AG04450 (cell line): ENCODE measurements at regions of chr6 and their contacts with region 1.

Region 1: GRCh38 chr6:155340464-155341129 is 26.3 kb upstream of the TFB1M start:
- DNase-seq: peak; percentile 10
- H3K4me3 ChIP-seq: no peak overlapping the region
- H3K27ac ChIP-seq: no peak overlapping the region
- H3K27me3 ChIP-seq: no peaks in the 10 kb centered on the region
- CTCF ChIP-seq: peak; percentile 54

Region 2: GRCh38 chr6:155174576-155175211 is 165.9 kb before region 1 on chr6:
- CTCF ChIA-PET with region 1: no interaction called
- POLR2A ChIA-PET with region 1: no interaction called
- DNase-seq: peak; percentile 55
- H3K4me3 ChIP-seq: no peak overlapping the region
- H3K27ac ChIP-seq: no peak overlapping the region
- H3K27me3 ChIP-seq: no peaks in the 10 kb centered on the region
- CTCF ChIP-seq: peak; percentile 81

Region 3: DNA sequence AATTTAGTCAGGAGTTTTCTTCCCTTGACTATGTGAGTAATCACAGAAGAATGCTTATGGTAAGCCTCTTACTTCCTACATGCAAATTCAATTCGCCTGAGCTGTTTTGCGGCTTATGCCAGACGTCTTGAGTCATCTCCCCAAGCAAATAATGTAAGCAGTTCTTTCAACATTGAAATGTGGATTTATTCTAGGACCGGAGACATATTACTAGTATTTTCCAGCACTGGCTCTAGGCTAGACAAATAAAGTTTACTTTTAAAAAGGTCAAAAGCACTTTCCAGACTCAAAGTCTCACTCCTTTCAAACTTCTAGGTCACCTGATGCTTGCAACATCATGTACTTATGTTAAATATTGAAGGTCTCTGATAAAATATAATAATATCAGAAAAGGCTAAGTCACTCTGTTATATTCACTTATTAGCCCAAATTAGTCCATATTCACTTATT is 153.1 kb after region 1 on chr6:
- CTCF ChIA-PET with region 1: interaction called, 16 read pairs
- POLR2A ChIA-PET with region 1: no interaction called
- DNase-seq: peak; percentile 98
- H3K4me3 ChIP-seq: no peak overlapping the region
- H3K27ac ChIP-seq: peak overlapping the region; percentile 90
- H3K27me3 ChIP-seq: no peaks in the 10 kb centered on the region
- CTCF ChIP-seq: no peak

Region 4: GRCh38 chr6:155638200-155638599 is 297.6 kb after region 1 on chr6:
- CTCF ChIA-PET with region 1: no interaction called
- POLR2A ChIA-PET with region 1: no interaction called
- DNase-seq: no peak
- H3K4me3 ChIP-seq: no peak overlapping the region
- H3K27ac ChIP-seq: no peak overlapping the region
- H3K27me3 ChIP-seq: no peaks in the 10 kb centered on the region
- CTCF ChIP-seq: no peak